ENCODE measurements at regions of chr9 and their contacts with region 1.

Region 1: DNA sequence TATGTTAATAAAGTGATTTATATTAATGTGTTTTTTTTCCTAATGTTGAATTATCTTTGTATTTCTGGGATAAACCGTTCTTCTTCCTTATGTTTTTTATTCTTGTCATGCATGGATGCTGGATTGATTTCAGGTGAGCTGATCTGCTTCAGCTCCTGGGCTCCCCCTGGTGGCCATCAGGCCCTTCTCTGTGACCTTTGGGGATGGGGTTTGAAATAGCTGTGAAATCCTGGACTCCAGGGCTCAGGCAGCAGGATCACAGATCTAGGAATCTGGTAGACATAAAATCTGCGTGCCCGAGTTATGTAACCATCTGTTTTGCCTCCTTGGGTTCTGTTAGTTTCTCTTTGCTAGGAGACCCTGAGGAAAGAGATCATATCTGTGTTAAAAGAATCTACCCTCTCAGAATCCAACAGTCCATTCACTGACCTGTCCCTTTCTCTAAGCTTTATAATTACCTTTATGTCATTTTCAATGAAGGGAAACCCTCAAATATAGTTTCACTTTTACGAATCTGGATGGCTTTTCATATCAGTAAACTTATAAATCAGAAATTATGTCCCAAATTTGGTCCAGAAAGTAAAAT is 12.2 kb upstream of the OR13J1 start:
- DNase-seq: peak; percentile 82
- H3K4me3 Mint-ChIP-seq: no peak overlapping the region
- H3K27ac Mint-ChIP-seq: no peak overlapping the region
- H3K4me1 Mint-ChIP-seq: no peaks in the 10 kb centered on the region
- H3K27me3 Mint-ChIP-seq: peaks cover 37% of the 10 kb centered on the region

Region 2: DNA sequence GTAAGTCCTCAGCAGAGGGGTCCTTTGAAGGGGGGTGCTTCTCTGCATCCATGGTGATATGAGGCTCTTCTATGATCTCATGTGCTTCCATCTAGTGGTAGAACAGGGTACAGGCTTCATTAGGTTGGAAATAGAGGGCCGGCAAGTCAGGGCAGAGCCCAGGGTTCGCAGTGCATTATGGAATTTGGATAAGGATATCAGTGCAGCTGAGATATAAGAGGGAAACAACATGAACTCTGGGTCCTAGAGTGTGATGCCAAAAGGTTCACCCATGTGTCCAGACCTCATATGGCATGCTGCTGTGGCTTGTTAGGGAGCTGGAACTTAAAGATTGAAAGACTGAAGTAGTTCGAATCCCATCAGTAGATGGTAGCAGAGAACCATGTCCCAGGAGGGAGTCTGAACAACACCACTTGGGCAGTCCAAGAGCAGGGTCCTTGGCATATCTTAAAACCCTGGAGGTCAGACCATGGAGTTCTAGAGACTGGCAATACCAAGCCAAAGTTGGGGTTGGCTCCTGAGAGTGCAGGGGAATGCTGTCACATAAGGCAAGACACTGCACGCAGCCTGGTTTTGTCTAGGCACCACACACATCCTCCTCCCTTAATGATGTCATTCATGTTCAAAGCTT is 56.2 kb before region 1 on chr9:
- CTCF ChIA-PET with region 1: interaction called, 12 read pairs
- POLR2A ChIA-PET with region 1: no interaction called
- DNase-seq: peak; percentile 52
- H3K4me3 Mint-ChIP-seq: no peak overlapping the region
- H3K27ac Mint-ChIP-seq: no peak overlapping the region
- H3K4me1 Mint-ChIP-seq: peaks cover 26% of the 10 kb centered on the region
- H3K27me3 Mint-ChIP-seq: peaks cover 5% of the 10 kb centered on the region

Region 3: DNA sequence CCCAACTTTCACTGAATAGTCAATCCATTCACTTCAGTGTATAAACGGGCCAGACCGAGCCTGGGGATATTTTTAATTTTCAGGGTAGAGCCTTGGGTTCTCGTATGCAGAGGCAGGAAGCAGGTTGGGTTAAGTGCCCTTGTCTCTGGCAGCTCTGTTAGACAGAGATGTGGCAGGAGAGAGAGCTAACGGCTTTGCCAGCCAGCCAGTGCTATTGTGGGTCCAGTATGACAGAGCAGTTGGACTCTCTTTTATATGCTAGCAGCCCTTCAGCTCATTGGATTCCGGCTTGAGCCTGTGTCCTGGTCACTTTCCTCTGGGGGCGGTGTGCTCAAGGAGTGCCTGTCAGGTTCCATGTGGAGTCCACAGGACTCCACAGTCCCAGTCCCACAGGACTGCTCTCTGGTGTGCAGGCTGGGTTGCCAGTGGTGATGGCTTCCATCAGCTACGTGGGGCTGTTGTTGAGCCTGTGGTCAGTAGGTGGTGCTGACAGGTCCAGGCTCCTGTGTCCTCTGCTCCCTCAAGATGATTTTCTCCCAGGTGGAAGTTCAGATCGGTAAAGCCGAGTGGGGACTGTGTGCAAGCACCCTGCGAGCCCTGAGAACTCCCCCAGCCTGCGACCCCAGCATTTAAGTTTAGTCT is 322.7 kb after region 1 on chr9:
- CTCF ChIA-PET with region 1: no interaction called
- POLR2A ChIA-PET with region 1: no interaction called
- DNase-seq: no peak
- H3K4me3 Mint-ChIP-seq: no peak overlapping the region
- H3K27ac Mint-ChIP-seq: no peak overlapping the region
- H3K4me1 Mint-ChIP-seq: peaks cover 47% of the 10 kb centered on the region
- H3K27me3 Mint-ChIP-seq: no peaks in the 10 kb centered on the region

Region 4: GRCh38 chr9:36441966-36442365 is 559.6 kb after region 1 on chr9:
- CTCF ChIA-PET with region 1: no interaction called
- POLR2A ChIA-PET with region 1: no interaction called
- DNase-seq: no peak
- H3K4me3 Mint-ChIP-seq: no peak overlapping the region
- H3K27ac Mint-ChIP-seq: no peak overlapping the region
- H3K4me1 Mint-ChIP-seq: peaks cover 31% of the 10 kb centered on the region
- H3K27me3 Mint-ChIP-seq: no peaks in the 10 kb centered on the region